Panc1 (cell line): ENCODE measurements at regions of chr17 and their contacts with region 1.

Region 1: DNA sequence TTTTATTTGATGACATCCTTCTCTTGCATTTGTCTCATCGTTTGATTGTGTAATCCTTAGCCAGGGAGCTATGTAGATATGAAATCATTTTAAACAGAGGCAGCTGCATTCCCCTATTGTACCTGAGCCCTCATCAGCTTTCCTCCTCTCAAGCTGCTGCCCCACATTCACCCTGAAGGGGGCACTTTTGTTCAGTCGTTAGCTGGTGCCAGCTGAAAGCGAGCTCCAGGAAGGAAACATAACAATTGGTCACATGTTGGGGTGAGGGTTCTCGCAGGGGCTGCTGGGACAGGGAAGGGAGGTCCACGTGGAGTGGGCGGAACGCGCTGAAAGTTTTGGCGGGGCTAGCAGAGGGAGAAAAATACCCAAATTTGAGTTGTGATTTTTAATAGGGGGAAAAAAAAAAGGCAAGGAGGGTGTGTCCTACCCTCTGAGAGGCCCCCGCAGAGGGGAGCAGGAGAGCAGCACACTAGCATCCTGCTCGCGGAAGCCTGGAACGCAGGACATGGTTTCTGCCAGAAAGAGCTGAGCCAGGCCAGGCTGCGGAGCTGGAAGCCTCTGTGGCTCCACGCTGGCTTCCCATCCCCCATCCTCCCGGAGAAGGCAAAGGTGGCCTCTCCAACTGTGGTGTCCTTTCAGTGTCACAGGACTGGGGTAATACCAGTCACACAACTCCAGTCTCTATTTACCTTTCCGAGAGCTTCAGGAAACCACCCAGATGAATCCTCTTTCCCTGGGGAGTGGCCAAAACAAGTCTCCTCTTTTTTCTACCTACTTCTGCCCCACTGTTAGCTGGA is 8.5 kb upstream of the MSL1 start:
- DNase-seq: peak; percentile 84
- ATAC-seq: peak; percentile 92
- H3K4me3 ChIP-seq: peak overlapping the region; percentile 43 to 68
- H3K27ac ChIP-seq: peak overlapping the region; percentile 97
- H3K4me1 ChIP-seq: peaks cover 39% of the 10 kb centered on the region
- H3K27me3 ChIP-seq: no peaks in the 10 kb centered on the region
- CTCF ChIP-seq: peak; percentile 90

Region 2: DNA sequence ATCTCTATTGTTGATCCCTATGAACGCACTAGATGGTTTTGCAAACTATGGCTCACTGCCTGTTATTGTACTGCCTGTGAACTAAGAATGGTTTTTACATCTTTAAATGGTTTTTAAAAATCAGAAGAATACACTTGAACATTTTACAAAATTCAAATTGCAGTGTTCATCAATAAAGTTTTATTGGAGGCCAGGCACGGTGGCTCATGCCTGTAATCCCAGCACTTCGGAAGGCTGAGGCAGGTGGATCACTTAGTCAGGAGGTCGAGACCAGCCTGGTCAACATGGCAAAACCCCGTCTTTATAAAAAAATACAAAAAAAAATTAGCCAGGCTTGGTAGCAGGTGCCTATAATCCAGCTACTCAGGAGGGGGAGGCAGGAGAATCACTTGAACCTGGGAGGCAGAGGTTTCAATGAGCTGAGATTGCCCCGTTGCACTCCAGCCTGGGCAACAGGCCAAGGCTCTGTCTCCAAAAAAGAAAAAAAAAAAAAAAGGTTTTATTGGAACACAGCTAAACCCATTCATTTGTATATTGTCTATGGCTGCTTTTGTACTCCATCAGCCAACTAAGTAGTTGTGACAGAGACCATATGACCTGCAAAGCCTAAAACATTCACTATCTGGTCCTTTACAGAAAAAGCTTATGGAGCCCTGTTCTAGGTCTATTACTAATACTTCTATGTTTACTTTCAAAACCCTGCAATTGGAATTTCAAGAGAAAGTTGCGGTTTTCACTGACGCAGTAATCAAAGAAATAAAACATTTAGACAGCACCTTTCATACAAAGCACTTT is 268.1 kb before region 1 on chr17:
- CTCF ChIA-PET with region 1: no interaction called
- POLR2A ChIA-PET with region 1: no interaction called
- in situ Hi-C with region 1: no loop called
- intact Hi-C with region 1: no loop called
- DNase-seq: no peak
- ATAC-seq: no peak
- H3K4me3 ChIP-seq: no peak overlapping the region
- H3K27ac ChIP-seq: no peak overlapping the region
- H3K4me1 ChIP-seq: no peaks in the 10 kb centered on the region
- H3K27me3 ChIP-seq: peaks cover 16% of the 10 kb centered on the region
- CTCF ChIP-seq: no peak

Region 3: GRCh38 chr17:39952680-39953470 is 160.4 kb before region 1 on chr17:
- CTCF ChIA-PET with region 1: no interaction called
- POLR2A ChIA-PET with region 1: interaction called, 13 read pairs
- in situ Hi-C with region 1: no loop called
- intact Hi-C with region 1: no loop called
- DNase-seq: no peak
- ATAC-seq: peak; percentile 94
- H3K4me3 ChIP-seq: peak overlapping the region; percentile 43 to 63
- H3K27ac ChIP-seq: peak overlapping the region; percentile 65
- H3K4me1 ChIP-seq: no peaks in the 10 kb centered on the region; the same call in 1 of the 2 replicates
- H3K27me3 ChIP-seq: no peaks in the 10 kb centered on the region
- CTCF ChIP-seq: no peak

Region 4: GRCh38 chr17:40019140-40019991 is 93.9 kb before region 1 on chr17:
- CTCF ChIA-PET with region 1: interaction called, 5 read pairs
- POLR2A ChIA-PET with region 1: interaction called, 4 read pairs
- in situ Hi-C with region 1: no loop called
- intact Hi-C with region 1: loop called (anchors 10 kb)
- DNase-seq: no peak
- ATAC-seq: 0 out of 2 replicates have a peak, but pooled peaks have one; percentile 36
- H3K4me3 ChIP-seq: no peak overlapping the region
- H3K27ac ChIP-seq: no peak overlapping the region
- H3K4me1 ChIP-seq: peaks cover 12% of the 10 kb centered on the region
- H3K27me3 ChIP-seq: no peaks in the 10 kb centered on the region
- CTCF ChIP-seq: no peak

Region 5: DNA sequence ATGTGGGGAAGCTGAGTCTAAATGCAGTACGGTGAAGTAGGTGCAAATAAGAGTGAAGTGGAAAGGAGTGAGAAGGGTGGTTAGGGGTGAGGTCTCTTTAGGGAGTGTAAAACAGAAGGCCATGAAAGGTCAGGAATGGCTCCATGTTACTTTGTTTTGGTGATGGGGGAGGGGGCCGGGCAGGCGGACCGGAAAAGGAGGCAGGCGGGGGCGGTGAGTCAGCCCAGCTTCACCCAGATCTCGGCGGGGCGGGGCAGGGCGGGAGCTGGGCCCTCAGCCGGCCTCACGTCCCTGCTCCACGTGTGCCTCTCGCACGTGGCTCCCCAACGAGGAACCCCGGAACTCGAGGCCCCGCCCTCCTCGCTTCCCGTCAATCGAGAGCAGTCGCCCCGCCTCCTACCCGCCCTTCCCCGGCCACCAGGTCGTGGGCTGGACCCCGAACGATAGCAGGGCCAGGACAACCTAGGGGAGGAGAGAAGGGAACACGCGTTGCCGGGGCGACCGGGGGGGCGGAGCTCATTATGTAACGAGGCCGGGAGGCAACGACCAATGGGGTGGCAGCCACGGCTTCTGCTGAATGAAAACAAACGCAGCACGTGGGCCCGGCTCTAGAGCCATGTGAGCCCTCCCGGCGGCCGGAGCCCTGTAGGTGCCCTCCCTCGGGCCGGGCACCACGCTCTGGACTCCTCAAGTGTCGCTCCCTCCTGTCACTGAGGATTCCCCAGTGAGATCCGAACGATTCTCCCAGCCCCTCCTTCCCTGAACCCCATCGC is 14.3 kb before region 1 on chr17:
- CTCF ChIA-PET with region 1: interaction called, 7 read pairs
- POLR2A ChIA-PET with region 1: interaction called, 13 read pairs
- in situ Hi-C with region 1: no loop called
- intact Hi-C with region 1: no loop called
- DNase-seq: peak; percentile 97
- ATAC-seq: peak; percentile 85
- H3K4me3 ChIP-seq: peak overlapping the region; percentile 87 to 98
- H3K27ac ChIP-seq: peak overlapping the region; percentile 89
- H3K4me1 ChIP-seq: peaks cover 32% of the 10 kb centered on the region
- H3K27me3 ChIP-seq: no peaks in the 10 kb centered on the region
- CTCF ChIP-seq: no peak

Region 6: DNA sequence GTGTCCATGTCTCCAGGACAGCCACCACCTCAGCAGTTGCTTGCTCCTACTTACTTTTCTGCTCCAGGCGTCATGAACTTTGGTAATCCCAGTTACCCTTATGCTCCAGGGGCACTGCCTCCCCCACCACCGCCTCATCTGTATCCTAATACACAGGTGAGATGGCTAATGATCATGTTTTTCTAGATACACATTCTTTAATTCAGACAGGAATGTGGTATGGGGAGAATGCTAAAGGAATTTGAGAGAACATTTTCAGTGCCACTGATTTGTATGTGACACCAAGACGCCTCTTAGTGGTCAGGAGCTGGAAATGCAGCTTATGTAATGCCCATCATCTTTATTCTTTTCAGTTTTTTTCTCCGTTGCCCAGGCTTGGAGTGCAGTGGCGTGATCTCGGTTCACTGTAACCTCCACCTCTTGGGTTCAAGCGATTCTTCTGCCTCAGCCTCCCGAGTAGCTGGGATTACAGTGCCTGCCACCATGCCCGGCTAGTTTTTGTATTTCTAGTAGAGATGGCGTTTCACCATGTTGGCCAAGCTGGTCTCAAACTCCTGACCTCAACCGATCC is 55.0 kb after region 1 on chr17:
- CTCF ChIA-PET with region 1: interaction called, 42 read pairs
- POLR2A ChIA-PET with region 1: interaction called, 10 read pairs
- in situ Hi-C with region 1: no loop called
- intact Hi-C with region 1: loop called (anchors 1 kb)
- DNase-seq: peak; percentile 41
- ATAC-seq: peak; percentile 83
- H3K4me3 ChIP-seq: no peak overlapping the region
- H3K27ac ChIP-seq: no peak overlapping the region
- H3K4me1 ChIP-seq: no peaks in the 10 kb centered on the region
- H3K27me3 ChIP-seq: no peaks in the 10 kb centered on the region
- CTCF ChIP-seq: peak; percentile 87

Region 7: GRCh38 chr17:40349920-40350909 is 236.9 kb after region 1 on chr17:
- CTCF ChIA-PET with region 1: no interaction called
- POLR2A ChIA-PET with region 1: interaction called, 16 read pairs
- in situ Hi-C with region 1: no loop called
- intact Hi-C with region 1: no loop called
- DNase-seq: no peak
- ATAC-seq: no peak
- H3K4me3 ChIP-seq: no peak overlapping the region
- H3K27ac ChIP-seq: no peak overlapping the region
- H3K4me1 ChIP-seq: peaks cover 77% of the 10 kb centered on the region
- H3K27me3 ChIP-seq: no peaks in the 10 kb centered on the region
- CTCF ChIP-seq: no peak

Region 8: GRCh38 chr17:40686192-40686591 is 572.9 kb after region 1 on chr17:
- CTCF ChIA-PET with region 1: no interaction called
- POLR2A ChIA-PET with region 1: no interaction called
- in situ Hi-C with region 1: no loop called
- intact Hi-C with region 1: no loop called
- DNase-seq: no peak
- ATAC-seq: no peak
- H3K4me3 ChIP-seq: no peak overlapping the region
- H3K27ac ChIP-seq: no peak overlapping the region
- H3K4me1 ChIP-seq: no peaks in the 10 kb centered on the region
- H3K27me3 ChIP-seq: peaks cover 7% of the 10 kb centered on the region; the same call in 1 of the 2 replicates
- CTCF ChIP-seq: no peak